Posterior cingulate gyrus (tissue), 11 donors: ENCODE measurements at regions of chr6 and their contacts with region 1.

Region 1: GRCh38 chr6:42745707-42746462 is at the start of gene TBCC:
- DNase-seq: peak; percentile 93 to 99 (median 96)

Region 2: DNA sequence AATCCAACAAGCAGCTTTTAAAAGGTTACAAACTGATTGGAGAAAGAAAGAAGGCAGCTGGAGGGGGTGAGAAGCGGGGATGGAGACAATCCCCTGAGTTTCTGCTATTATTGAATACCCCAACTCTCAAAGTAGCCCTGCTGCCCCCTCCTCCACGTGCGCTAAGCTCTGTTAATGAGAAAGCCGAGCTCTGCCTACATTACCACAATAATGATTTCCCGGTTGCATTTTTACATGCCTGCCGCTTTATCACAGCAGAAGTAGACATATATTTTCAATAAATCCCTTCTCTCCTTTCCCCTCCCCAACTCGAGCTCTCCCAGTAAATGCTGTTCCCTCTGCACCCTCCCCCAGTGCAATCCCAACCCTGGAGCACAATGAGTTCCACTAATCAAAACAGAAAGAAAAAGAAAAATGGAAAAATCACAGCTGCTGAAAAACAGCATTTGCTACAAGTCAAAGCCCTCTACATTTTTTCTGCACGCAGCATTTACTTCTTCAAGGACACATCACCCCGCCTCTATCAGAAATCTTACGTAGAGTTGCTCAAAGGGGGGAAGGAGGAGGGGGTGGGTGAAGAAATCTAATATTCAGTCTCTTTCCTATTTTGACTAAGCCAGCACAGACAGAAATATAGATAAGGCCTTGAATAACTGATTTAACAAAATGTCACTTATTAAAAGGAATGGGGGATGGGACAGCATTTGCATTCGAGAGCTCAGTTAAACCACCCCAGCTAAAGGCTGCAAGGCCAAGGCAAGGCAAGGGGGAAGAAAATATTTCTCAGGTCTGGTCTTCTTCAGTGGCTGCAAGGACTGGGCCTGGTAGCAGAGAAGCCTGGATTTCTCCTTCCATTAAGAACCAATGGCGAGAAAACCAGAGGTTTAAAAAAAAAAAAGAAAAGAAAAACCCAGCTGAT is 304.8 kb before region 1 on chr6:
- intact Hi-C with region 1: no loop called
- DNase-seq: peak in 1 of 10 donors; percentile 59

Region 3: DNA sequence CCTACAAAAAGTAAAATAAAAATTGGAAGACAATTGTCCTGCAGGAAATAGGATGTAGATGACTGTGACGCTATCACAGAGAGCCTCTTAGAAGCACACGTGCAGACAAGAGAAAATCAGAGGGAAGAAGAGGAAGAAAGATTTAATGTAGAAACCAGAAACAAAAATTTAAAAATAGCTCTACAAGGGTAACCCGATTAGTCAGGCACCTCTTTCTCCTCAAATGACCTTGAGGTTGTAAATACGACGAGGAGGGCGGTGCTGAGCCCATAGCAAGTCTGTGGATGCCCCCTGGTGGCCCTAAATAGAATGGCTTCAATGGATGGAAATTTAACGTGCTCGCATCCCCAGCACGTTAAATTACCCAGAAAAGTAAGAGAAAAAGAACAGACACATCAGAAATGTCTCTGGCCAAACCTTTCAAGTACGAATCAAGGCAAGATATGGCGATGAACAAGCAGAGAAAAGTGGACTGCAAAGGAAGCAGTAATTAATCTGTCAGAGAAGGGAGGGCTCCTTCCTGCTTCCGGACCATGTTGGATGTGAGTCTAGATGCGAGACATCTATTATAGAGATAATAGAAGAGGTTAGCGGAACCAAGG is 19.3 kb before region 1 on chr6:
- intact Hi-C with region 1: loop called (anchors 2 kb)
- DNase-seq: peak in 9 of 10 donors; percentile 22 to 92 (median 61)

Region 4: GRCh38 chr6:42879372-42880239 is 133.7 kb after region 1 on chr6 and contains the start of gene RPL7L1:
- intact Hi-C with region 1: loop called (anchors 5 kb)
- DNase-seq: peak; percentile 82 to 98 (median 88)